ENCODE measurements at regions of chr11 and their contacts with region 1.

Region 1: GRCh38 chr11:62726915-62727763 is at the start of gene HNRNPUL2:
- DNase-seq: peak; percentile 97
- H3K4me3 Mint-ChIP-seq: peak within 1 kb of the TSS; percentile 92
- H3K27ac Mint-ChIP-seq: peak within 1 kb of the TSS; percentile 97
- H3K4me1 Mint-ChIP-seq: peaks cover 16% of the 10 kb centered on the region
- H3K27me3 Mint-ChIP-seq: no peaks in the 10 kb centered on the region
- CTCF ChIP-seq: no peak
- total RNA-seq, gene HNRNPUL2: 36.4 and 36.6 TPM in 2 replicates

Region 2: DNA sequence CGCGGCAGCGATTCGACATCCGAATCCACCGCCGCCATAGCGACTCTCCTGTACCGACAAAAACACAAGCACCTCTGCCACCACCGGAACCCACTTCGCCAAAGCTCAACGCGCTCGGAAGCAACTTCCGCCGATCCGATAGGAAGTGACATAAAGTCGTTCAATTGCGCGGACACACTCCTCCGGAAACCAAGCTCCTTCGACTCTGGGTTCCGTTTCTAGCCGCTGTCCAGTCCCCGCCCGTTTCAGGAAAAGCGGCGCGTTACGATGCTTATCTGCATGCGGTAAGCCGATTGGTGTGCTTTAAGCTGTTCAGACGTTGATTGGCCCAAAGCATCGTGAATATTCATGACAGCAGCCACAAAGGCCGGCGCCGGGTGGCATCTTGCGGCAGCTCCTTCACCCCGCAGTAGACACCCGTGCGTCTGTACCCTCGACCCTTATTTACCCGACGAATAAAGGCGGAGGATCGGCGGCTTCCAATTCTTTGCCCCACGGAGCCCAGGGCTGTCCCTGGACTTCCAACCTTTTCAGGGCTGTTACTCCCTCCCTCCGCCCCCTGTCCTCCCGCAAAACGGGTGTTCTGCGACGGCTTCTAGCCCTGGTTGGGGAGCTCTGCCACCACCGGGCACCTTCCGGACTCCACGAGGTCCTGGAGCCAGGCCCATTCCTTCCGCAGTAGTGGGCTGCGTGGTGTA is 135.5 kb before region 1 on chr11 and contains the start of gene TUT1:
- CTCF ChIA-PET with region 1: interaction called, 3 read pairs
- POLR2A ChIA-PET with region 1: interaction called, 24 read pairs
- intact Hi-C with region 1: no loop called
- DNase-seq: peak; percentile 99
- H3K4me3 Mint-ChIP-seq: peak within 1 kb of the TSS; percentile 96
- H3K27ac Mint-ChIP-seq: peak within 1 kb of the TSS; percentile 95
- H3K4me1 Mint-ChIP-seq: peaks cover 12% of the 10 kb centered on the region
- H3K27me3 Mint-ChIP-seq: no peaks in the 10 kb centered on the region
- CTCF ChIP-seq: no peak
- total RNA-seq, gene TUT1: 26.0 and 28.3 TPM in 2 replicates

Region 3: GRCh38 chr11:62645956-62646824 is 80.9 kb before region 1 on chr11 and contains the start of gene GANAB:
- CTCF ChIA-PET with region 1: no interaction called
- POLR2A ChIA-PET with region 1: interaction called, 23 read pairs
- intact Hi-C with region 1: no loop called
- DNase-seq: peak; percentile 99
- H3K4me3 Mint-ChIP-seq: peak within 1 kb of the TSS; percentile 95
- H3K27ac Mint-ChIP-seq: peak within 1 kb of the TSS; percentile 92
- H3K4me1 Mint-ChIP-seq: no peaks in the 10 kb centered on the region
- H3K27me3 Mint-ChIP-seq: no peaks in the 10 kb centered on the region
- CTCF ChIP-seq: no peak
- total RNA-seq, gene GANAB: 364 and 374 TPM in 2 replicates

Region 4: DNA sequence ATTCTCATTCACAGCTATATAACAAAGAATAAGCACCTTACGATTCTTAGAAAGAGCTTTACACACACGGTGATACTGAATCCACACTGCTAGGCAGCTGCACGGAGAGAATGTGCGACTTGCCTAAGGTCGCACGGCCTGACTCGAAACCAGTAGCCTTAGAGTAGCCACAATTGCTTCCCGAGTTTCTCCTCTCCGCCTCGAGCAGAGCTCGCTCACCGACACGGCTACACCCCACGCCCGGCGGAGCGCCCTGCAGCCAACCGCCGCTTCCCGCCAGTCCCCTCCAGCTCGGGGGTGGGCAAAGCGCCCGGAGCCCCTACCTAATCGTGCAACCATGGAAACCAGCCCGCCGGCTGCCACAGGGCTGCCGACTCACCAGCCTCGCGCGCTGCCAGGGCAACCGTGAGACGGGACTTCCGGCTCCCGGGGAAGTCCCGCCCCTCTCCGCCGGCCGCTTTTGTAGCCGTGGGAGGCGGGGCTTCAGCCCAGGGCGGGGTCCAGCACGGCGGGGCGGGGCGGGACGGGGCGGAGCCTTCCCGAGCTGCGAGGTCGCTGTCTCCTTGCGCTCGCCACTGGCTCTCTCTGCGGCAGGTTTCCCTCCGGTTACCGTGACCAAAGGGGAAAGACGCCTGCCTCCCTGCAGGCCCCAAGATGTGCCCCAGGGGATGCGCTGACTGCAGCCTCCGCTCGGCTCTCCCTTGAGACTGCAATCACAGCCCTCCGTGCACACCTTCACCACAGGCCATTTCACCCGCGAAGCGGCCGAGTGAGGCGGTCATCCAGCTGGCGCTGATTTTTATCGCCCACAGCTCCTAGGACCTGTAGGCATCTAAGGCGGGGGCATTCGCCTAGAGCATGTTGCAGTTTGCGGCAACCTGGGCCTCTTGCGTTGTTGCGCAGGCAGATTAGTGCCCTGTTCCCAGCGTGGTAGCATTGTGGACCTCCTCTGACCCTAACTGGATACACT is 21.0 kb before region 1 on chr11:
- CTCF ChIA-PET with region 1: interaction called, 4 read pairs
- POLR2A ChIA-PET with region 1: interaction called, 197 read pairs
- intact Hi-C with region 1: no loop called
- DNase-seq: peak; percentile 91
- H3K4me3 Mint-ChIP-seq: peak overlapping the region; percentile 92
- H3K27ac Mint-ChIP-seq: peak overlapping the region; percentile 94
- H3K4me1 Mint-ChIP-seq: peaks cover 25% of the 10 kb centered on the region
- H3K27me3 Mint-ChIP-seq: no peaks in the 10 kb centered on the region
- CTCF ChIP-seq: no peak

Region 5: GRCh38 chr11:62787005-62787759 is 60.0 kb after region 1 on chr11 and contains the start of gene TMEM179B:
- CTCF ChIA-PET with region 1: interaction called, 9 read pairs
- POLR2A ChIA-PET with region 1: interaction called, 51 read pairs
- intact Hi-C with region 1: no loop called
- DNase-seq: peak; percentile 98
- H3K4me3 Mint-ChIP-seq: peak within 1 kb of the TSS; percentile 90
- H3K27ac Mint-ChIP-seq: peak within 1 kb of the TSS; percentile 93
- H3K4me1 Mint-ChIP-seq: peaks cover 15% of the 10 kb centered on the region
- H3K27me3 Mint-ChIP-seq: no peaks in the 10 kb centered on the region
- CTCF ChIP-seq: peak; percentile 40
- total RNA-seq, gene TMEM179B: 45.1 and 47.8 TPM in 2 replicates

Region 6: GRCh38 chr11:62841361-62842184 is 114.4 kb after region 1 on chr11:
- CTCF ChIA-PET with region 1: interaction called, 3 read pairs
- POLR2A ChIA-PET with region 1: interaction called, 95 read pairs
- intact Hi-C with region 1: loop called (anchors 2 kb)
- DNase-seq: peak; percentile 99
- H3K4me3 Mint-ChIP-seq: no peak overlapping the region
- H3K27ac Mint-ChIP-seq: no peak overlapping the region
- H3K4me1 Mint-ChIP-seq: peaks cover 12% of the 10 kb centered on the region
- H3K27me3 Mint-ChIP-seq: no peaks in the 10 kb centered on the region
- CTCF ChIP-seq: no peak

Region 7: DNA sequence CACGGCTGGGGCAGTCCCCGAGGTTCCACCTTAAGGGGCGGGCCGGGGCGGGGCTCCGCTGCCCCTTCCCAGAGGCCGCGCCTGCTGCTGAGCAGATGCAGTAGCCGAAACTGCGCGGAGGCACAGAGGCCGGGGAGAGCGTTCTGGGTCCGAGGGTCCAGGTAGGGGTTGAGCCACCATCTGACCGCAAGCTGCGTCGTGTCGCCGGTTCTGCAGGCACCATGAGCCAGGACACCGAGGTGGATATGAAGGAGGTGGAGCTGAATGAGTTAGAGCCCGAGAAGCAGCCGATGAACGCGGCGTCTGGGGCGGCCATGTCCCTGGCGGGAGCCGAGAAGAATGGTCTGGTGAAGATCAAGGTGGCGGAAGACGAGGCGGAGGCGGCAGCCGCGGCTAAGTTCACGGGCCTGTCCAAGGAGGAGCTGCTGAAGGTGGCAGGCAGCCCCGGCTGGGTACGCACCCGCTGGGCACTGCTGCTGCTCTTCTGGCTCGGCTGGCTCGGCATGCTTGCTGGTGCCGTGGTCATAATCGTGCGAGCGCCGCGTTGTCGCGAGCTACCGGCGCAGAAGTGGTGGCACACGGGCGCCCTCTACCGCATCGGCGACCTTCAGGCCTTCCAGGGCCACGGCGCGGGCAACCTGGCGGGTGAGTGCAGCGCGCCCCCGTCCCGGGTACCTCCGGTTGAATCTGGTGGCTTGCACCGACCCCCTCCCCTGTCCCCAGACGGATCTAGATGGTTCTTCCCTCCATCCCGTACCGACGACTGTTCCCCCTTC is 153.9 kb after region 1 on chr11 and contains the start of gene SLC3A2:
- CTCF ChIA-PET with region 1: interaction called, 4 read pairs
- POLR2A ChIA-PET with region 1: interaction called, 56 read pairs
- intact Hi-C with region 1: no loop called
- DNase-seq: peak; percentile 91
- H3K4me3 Mint-ChIP-seq: peak within 1 kb of the TSS; percentile 100
- H3K27ac Mint-ChIP-seq: peak within 1 kb of the TSS; percentile 99
- H3K4me1 Mint-ChIP-seq: peaks cover 47% of the 10 kb centered on the region
- H3K27me3 Mint-ChIP-seq: no peaks in the 10 kb centered on the region
- CTCF ChIP-seq: peak; percentile 70
- total RNA-seq, gene SLC3A2: 838 and 896 TPM in 2 replicates

Region 8: GRCh38 chr11:64240394-64241174 is 1513.4 kb after region 1 on chr11 and contains the start of gene FKBP2:
- CTCF ChIA-PET with region 1: no interaction called
- POLR2A ChIA-PET with region 1: no interaction called
- intact Hi-C with region 1: no loop called
- DNase-seq: peak; percentile 96
- H3K4me3 Mint-ChIP-seq: peak within 1 kb of the TSS; percentile 93
- H3K27ac Mint-ChIP-seq: peak within 1 kb of the TSS; percentile 98
- H3K4me1 Mint-ChIP-seq: peaks cover 19% of the 10 kb centered on the region
- H3K27me3 Mint-ChIP-seq: no peaks in the 10 kb centered on the region
- CTCF ChIP-seq: no peak
- total RNA-seq, gene FKBP2: 84.7 and 86.0 TPM in 2 replicates

Measured in MCF 10A (cell line).